ENCODE measurements at regions of chr1 and their contacts with region 1.

Region 1: GRCh38 chr1:35451125-35451528 is 106.1 kb downstream of the KIAA0319L start:
- H3K4me3 Mint-ChIP-seq: no peak overlapping the region
- H3K27ac Mint-ChIP-seq: no peak overlapping the region
- H3K4me1 Mint-ChIP-seq: peaks cover 51% of the 10 kb centered on the region
- H3K27me3 Mint-ChIP-seq: no peaks in the 10 kb centered on the region

Region 2: DNA sequence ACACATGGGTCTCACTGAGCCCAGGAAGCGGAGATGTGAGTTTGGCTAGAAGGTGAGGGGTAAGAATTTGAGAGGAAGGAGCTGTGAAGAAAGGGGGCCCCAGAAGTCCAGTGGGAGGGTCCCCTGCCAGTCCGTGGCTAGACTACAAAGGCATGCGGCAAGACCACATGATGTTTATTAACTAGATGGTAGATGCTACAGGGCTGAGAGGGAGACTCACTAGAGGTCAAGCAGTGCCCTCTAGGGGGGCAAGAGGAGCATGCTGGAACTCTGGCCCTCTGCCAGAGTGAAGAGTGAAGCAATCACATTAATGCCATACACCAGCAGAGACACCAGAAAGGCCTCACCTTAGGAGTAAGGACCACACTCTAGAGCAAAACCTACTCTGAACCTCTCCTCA is 93.9 kb after region 1 on chr1:
- intact Hi-C with region 1: loop called (anchors 5 kb)
- H3K4me3 Mint-ChIP-seq: no peak overlapping the region
- H3K27ac Mint-ChIP-seq: peak overlapping the region; percentile 56
- H3K4me1 Mint-ChIP-seq: peaks cover 54% of the 10 kb centered on the region
- H3K27me3 Mint-ChIP-seq: no peaks in the 10 kb centered on the region

Region 3: GRCh38 chr1:35783055-35783583 is 332.0 kb after region 1 on chr1:
- intact Hi-C with region 1: no loop called
- H3K4me3 Mint-ChIP-seq: no peak overlapping the region
- H3K27ac Mint-ChIP-seq: no peak overlapping the region
- H3K4me1 Mint-ChIP-seq: no peaks in the 10 kb centered on the region
- H3K27me3 Mint-ChIP-seq: no peaks in the 10 kb centered on the region

Measured in dendritic cell treated with granulocyte-macrophage colony-stimulating factor and Interleukin-4, amounts not matched to agents 40 ng/mL and 50 ng/mL, for 4 days (primary cell).